IMR-90 (cell line): ENCODE measurements at regions of chr2 and their contacts with region 1.

Region 1: DNA sequence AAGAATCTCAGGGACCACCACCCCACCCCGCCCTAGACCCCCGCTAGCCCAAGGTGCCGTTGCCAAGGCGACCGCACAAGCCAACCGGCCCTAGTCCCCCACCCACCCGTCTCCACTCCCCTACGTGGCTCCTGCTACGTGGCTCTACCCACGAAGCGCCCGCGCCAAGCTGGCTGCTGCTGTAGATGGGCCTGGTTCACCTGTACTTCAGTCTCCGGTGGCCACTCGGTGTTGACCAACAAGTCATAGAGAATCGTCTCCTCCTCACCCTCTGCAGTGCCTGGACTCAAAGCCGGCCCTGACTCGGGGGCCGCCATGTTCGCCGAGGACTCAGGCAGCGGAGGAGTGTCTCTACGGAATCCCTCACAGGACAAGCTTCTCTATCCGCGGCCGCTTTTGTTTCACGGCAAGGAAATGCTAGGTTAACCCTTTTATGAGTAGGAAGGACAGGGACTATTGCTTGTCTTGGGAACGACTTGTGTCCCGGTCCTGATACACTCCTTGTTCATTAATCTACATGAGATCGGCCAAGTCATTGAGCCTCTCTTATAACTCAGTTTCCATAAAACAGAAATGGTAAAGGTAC is at the start of gene NBAS:
- DNase-seq: peak; percentile 85
- ATAC-seq: peak; percentile 92
- H3K4me3 ChIP-seq: peak within 1 kb of the TSS; percentile 90
- H3K27ac ChIP-seq: peak within 1 kb of the TSS; percentile 98
- H3K4me1 ChIP-seq: no peaks in the 10 kb centered on the region
- H3K27me3 ChIP-seq: no peaks in the 10 kb centered on the region
- CTCF ChIP-seq: no peak
- POLR2A ChIP-seq: peak; percentile 75
- RAD21 ChIP-seq: no peak
- total RNA-seq, gene NBAS: 88.9 and 105 TPM in 2 replicates

Region 2: GRCh38 chr2:14475994-14476393 is 1085.1 kb before region 1 on chr2:
- CTCF ChIA-PET with region 1: no interaction called
- POLR2A ChIA-PET with region 1: interaction called, 11 read pairs
- dilution Hi-C with region 1: no loop called
- in situ Hi-C with region 1: no loop called
- intact Hi-C with region 1: no loop called
- DNase-seq: no peak
- ATAC-seq: no peak
- H3K4me3 ChIP-seq: no peak overlapping the region
- H3K27ac ChIP-seq: no peak overlapping the region
- H3K4me1 ChIP-seq: no peaks in the 10 kb centered on the region
- H3K27me3 ChIP-seq: no peaks in the 10 kb centered on the region
- CTCF ChIP-seq: no peak
- POLR2A ChIP-seq: no peak
- RAD21 ChIP-seq: no peak

Region 3: GRCh38 chr2:15177103-15177502 is 384.0 kb before region 1 on chr2:
- CTCF ChIA-PET with region 1: no interaction called
- POLR2A ChIA-PET with region 1: interaction called, 6 read pairs
- dilution Hi-C with region 1: no loop called
- in situ Hi-C with region 1: no loop called
- intact Hi-C with region 1: loop called (anchors 10 kb)
- DNase-seq: peak; percentile 63
- ATAC-seq: peak; percentile 80
- H3K4me3 ChIP-seq: no peak overlapping the region
- H3K27ac ChIP-seq: no peak overlapping the region
- H3K4me1 ChIP-seq: peaks cover 2% of the 10 kb centered on the region
- H3K27me3 ChIP-seq: no peaks in the 10 kb centered on the region
- CTCF ChIP-seq: no peak
- POLR2A ChIP-seq: no peak
- RAD21 ChIP-seq: no peak

Region 4: DNA sequence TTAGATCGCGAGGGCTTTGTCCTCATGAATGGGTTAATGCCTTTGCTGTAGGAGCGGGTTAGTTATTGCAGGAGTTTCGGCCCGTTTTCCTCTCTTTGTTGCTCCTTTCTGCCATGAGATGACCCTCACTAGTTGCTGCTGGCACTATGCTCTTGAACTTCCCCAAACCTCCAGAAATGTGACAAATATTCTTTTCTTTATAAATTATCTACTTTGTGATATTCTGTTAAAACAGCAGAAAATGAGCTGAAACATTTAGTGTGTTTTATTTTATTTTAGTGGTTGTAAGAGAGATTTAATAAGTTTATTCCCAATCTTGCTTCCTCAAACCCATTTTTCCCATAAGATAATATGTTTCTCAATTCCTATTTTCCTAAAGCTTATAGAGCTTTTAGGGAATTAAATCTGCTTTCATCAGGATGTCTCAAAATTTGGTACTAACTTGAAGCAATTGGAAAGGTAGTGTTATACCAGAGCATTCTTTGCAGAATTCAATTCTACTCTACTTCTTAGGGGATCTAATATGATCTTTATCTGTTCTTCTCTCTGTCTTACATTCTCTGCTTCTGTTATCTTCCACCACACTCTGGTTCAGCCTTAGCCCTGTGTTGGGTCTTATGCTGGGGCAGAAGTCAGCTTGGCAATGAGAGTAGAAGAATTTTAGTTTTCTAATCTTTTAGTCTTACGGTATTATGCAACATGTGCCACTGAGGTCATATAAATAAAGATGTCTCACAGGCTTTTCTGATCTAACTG is 53.6 kb after region 1 on chr2:
- CTCF ChIA-PET with region 1: no interaction called
- POLR2A ChIA-PET with region 1: no interaction called
- dilution Hi-C with region 1: no loop called
- in situ Hi-C with region 1: no loop called
- intact Hi-C with region 1: no loop called
- DNase-seq: peak; percentile 7
- ATAC-seq: peak; percentile 49
- H3K4me3 ChIP-seq: no peak overlapping the region
- H3K27ac ChIP-seq: no peak overlapping the region
- H3K4me1 ChIP-seq: no peaks in the 10 kb centered on the region
- H3K27me3 ChIP-seq: no peaks in the 10 kb centered on the region
- CTCF ChIP-seq: no peak
- POLR2A ChIP-seq: no peak
- RAD21 ChIP-seq: no peak